Lower lobe of right lung (tissue), 2 donors: ENCODE measurements at regions of chr5 and their contacts with region 1.

Region 1: GRCh38 chr5:146533260-146533857 is 17.4 kb upstream of the GPR151 start:
- DNase-seq: peak; percentile 62
- ATAC-seq: peak; percentile 81
- H3K4me3 ChIP-seq: no peak overlapping the region
- H3K27ac ChIP-seq: no peak overlapping the region
- H3K4me1 ChIP-seq: no peaks in the 10 kb centered on the region
- H3K27me3 ChIP-seq: no peaks in the 10 kb centered on the region
- CTCF ChIP-seq: peak; percentile 66

Region 2: DNA sequence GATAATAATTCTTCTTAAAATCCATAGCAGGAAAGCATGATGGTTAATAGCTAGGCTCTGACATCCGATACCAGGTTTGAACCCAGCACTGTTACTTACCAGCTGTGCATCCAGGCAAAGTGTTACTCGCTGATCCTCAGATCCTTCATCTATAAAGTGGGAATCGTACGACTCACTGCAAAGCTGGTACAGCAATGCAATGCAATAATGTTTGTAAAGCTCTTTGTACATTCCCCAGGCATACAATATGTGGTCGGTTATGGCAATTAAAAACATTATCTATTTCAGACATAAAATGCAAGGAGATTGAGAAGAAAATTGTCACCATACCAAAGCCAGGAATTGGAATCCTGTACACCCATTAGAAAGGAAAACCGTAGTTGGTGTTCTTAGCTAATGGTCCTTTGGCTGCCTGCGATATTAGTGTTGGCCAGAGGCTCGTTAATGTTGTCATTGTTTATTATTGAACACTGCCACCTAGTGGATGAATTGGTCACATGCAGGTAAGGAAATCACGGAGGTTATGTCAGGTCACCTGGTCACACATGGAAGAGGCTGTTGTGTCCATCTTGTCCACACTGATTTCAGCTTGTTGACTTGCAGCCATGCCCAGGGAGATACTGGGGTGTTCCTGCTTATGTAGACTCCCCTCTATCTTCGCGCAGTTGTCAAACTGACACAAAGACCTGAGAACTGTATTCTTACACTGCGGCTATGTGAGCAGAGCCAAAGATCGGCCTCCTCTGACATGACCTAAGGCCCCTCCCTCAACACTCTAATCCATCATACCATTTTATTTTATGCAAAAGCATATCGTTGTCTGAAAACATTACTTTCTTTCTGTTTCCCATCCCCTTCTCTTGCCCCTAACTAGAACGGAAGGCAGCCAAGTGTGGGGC is 432.7 kb after region 1 on chr5:
- intact Hi-C with region 1: loop called (anchors 10 kb)
- DNase-seq: no peak
- ATAC-seq: peak; percentile 90 to 92
- H3K4me3 ChIP-seq: no peak overlapping the region
- H3K27ac ChIP-seq: no peak overlapping the region
- H3K4me1 ChIP-seq: no peaks in the 10 kb centered on the region
- H3K27me3 ChIP-seq: no peaks in the 10 kb centered on the region
- CTCF ChIP-seq: peak; percentile 89